Activated B cell treated with CpG ODN at 0.5 μM for 24 hours (primary cell): ENCODE measurements at regions of chr2 and their contacts with region 1.

Region 1: DNA sequence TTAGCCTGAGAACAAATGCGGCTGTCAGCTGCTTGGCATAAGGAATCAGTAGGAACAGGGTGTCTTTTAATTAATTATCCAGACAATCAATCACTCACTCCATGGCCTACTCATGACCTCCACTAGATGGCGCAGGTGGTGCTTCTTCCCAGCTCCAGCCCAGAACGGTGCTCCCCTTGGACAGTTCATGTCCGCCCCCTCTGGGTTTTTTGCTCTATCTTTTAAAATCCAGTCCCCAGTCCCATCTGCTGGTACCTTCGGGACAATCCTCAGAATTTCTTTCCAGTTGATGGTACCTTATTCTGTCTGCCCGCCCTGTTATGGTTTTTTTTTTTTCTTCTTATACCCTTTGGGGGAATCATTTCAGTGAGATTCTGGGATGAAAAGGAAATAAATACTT is 99.8 kb downstream of the CACNB4 start:
- DNase-seq: peak; percentile 18
- ATAC-seq: peak; percentile 58
- H3K4me3 Mint-ChIP-seq: no peak overlapping the region
- H3K27ac Mint-ChIP-seq: no peak overlapping the region
- H3K4me1 Mint-ChIP-seq: peaks cover under 1% of the 10 kb centered on the region
- H3K27me3 Mint-ChIP-seq: no peaks in the 10 kb centered on the region
- CTCF ChIP-seq: peak; percentile 52

Region 2: GRCh38 chr2:151614606-151615306 is 384.3 kb before region 1 on chr2:
- CTCF ChIA-PET with region 1: no interaction called
- POLR2A ChIA-PET with region 1: no interaction called
- intact Hi-C with region 1: loop called (anchors 1 kb)
- DNase-seq: no peak
- ATAC-seq: no peak
- H3K4me3 Mint-ChIP-seq: no peak overlapping the region
- H3K27ac Mint-ChIP-seq: no peak overlapping the region
- H3K4me1 Mint-ChIP-seq: peaks cover 3% of the 10 kb centered on the region
- H3K27me3 Mint-ChIP-seq: no peaks in the 10 kb centered on the region
- CTCF ChIP-seq: no peak

Region 3: GRCh38 chr2:151808258-151809072 is 190.6 kb before region 1 on chr2:
- CTCF ChIA-PET with region 1: no interaction called
- POLR2A ChIA-PET with region 1: no interaction called
- intact Hi-C with region 1: loop called (anchors 1 kb)
- DNase-seq: no peak
- ATAC-seq: peak; percentile 60
- H3K4me3 Mint-ChIP-seq: no peak overlapping the region
- H3K27ac Mint-ChIP-seq: no peak overlapping the region
- H3K4me1 Mint-ChIP-seq: peaks cover 4% of the 10 kb centered on the region
- H3K27me3 Mint-ChIP-seq: no peaks in the 10 kb centered on the region
- CTCF ChIP-seq: peak; percentile 20

Region 4: GRCh38 chr2:152418688-152419087 is 419.6 kb after region 1 on chr2:
- CTCF ChIA-PET with region 1: no interaction called
- POLR2A ChIA-PET with region 1: no interaction called
- intact Hi-C with region 1: no loop called
- DNase-seq: no peak
- ATAC-seq: no peak
- H3K4me3 Mint-ChIP-seq: no peak overlapping the region
- H3K27ac Mint-ChIP-seq: no peak overlapping the region
- H3K4me1 Mint-ChIP-seq: peaks cover 20% of the 10 kb centered on the region
- H3K27me3 Mint-ChIP-seq: no peaks in the 10 kb centered on the region
- CTCF ChIP-seq: no peak